HepG2 (cell line): ENCODE measurements at regions of chr5 and their contacts with region 1.

Region 1: GRCh38 chr5:79133657-79134451 is 22.2 kb downstream of the BHMT start:
- DNase-seq: peak; percentile 64
- ATAC-seq: peak; percentile 84
- H3K4me3 ChIP-seq: peak overlapping the region in 2 of 3 experiments; percentile 8 to 30; a peak in 4 of 6 replicates
- H3K27ac ChIP-seq: no peak overlapping the region
- H3K4me1 ChIP-seq: peaks cover 24% of the 10 kb centered on the region
- H3K27me3 ChIP-seq: no peaks in the 10 kb centered on the region
- CTCF ChIP-seq: peak; percentile 79
- EP300 ChIP-seq: no peak
- POLR2A ChIP-seq: no peak
- RAD21 ChIP-seq: peak; percentile 32; the same call in 1 of the 2 replicates

Region 2: GRCh38 chr5:78899922-78900362 is 233.9 kb before region 1 on chr5:
- CTCF ChIA-PET with region 1: interaction called, 3 read pairs
- POLR2A ChIA-PET with region 1: no interaction called
- in situ Hi-C with region 1: loop called (anchors 10 kb)
- intact Hi-C with region 1: loop called (anchors 10 kb)
- DNase-seq: peak; percentile 58
- ATAC-seq: peak; percentile 86
- H3K4me3 ChIP-seq: no peak overlapping the region
- H3K27ac ChIP-seq: no peak overlapping the region
- H3K4me1 ChIP-seq: no peaks in the 10 kb centered on the region
- H3K27me3 ChIP-seq: no peaks in the 10 kb centered on the region
- CTCF ChIP-seq: peak; percentile 72
- EP300 ChIP-seq: no peak
- POLR2A ChIP-seq: no peak
- RAD21 ChIP-seq: peak; percentile 72

Region 3: GRCh38 chr5:79193640-79194039 is 59.8 kb after region 1 on chr5:
- CTCF ChIA-PET with region 1: no interaction called
- POLR2A ChIA-PET with region 1: no interaction called
- in situ Hi-C with region 1: no loop called
- intact Hi-C with region 1: loop called (anchors 10 kb)
- DNase-seq: no peak
- ATAC-seq: peak; percentile 23; the same call in 1 of the 3 replicates
- H3K4me3 ChIP-seq: no peak overlapping the region
- H3K27ac ChIP-seq: no peak overlapping the region
- H3K4me1 ChIP-seq: no peaks in the 10 kb centered on the region
- H3K27me3 ChIP-seq: no peaks in the 10 kb centered on the region
- CTCF ChIP-seq: no peak
- EP300 ChIP-seq: no peak
- POLR2A ChIP-seq: no peak
- RAD21 ChIP-seq: no peak

Region 4: DNA sequence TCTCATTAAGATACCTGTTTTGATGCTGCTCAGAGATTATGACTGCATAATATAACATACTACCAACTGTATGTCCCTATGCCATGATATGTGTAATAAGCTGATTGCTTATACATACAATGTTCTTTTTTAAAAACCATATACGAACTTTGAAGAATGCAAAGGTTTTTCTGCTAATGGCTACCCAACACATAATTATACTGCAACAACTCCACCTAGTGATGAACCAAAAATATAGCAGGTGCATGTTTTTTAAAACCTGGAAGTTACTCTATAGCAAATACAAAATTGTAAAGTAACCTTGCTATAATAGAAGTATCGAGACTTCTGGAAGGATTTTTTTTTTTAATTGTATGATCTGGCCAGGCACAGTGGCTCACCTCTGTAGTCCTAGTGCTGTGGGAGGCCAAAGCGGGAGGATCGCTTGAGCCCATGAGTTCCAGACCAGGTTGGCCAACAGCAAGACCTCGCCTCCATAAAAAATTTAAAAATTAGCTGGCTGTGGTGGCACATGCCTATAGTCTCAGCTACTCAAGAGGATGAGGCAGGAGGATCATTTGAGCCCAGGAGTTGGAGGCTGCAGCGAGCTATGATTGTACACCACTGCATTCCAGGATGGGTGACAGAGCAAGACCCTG is 331.0 kb after region 1 on chr5:
- CTCF ChIA-PET with region 1: interaction called, 4 read pairs
- POLR2A ChIA-PET with region 1: no interaction called
- in situ Hi-C with region 1: loop called (anchors 25 kb)
- intact Hi-C with region 1: loop called (anchors 1 kb)
- DNase-seq: no peak
- ATAC-seq: no peak
- H3K4me3 ChIP-seq: no peak overlapping the region
- H3K27ac ChIP-seq: no peak overlapping the region
- H3K4me1 ChIP-seq: no peaks in the 10 kb centered on the region
- H3K27me3 ChIP-seq: no peaks in the 10 kb centered on the region
- CTCF ChIP-seq: peak; percentile 61
- EP300 ChIP-seq: no peak
- POLR2A ChIP-seq: no peak
- RAD21 ChIP-seq: no peak